ENCODE measurements at regions of chr15 and their contacts with region 1.

Region 1: DNA sequence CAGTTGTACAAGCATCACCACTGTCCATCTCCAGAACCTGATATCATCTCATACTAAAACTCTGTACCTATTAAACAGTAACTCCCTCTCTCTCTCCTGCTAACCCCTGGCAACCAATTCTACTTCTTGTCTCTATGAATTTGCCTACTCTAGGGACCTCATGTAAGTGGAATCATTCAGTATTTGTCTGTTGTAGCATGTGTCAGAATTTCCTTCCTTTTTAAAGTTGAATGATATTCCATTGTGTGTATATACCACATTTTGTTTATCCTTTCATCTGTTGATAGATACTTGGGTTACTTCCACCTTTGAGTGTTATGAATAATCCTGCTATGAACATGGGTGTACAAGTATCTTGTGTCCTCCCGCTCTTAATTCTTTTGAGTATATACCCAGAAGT is 16.6 kb downstream of the ZNF592 start:
- DNase-seq: no peak
- ATAC-seq: no peak
- H3K4me3 ChIP-seq: no peak overlapping the region
- H3K27ac ChIP-seq: peak overlapping the region in 2 of 4 donors; percentile 15 to 71
- H3K4me1 ChIP-seq: peaks cover 43 to 47% of the 10 kb centered on the region in 2 donors
- H3K27me3 ChIP-seq: no peaks in the 10 kb centered on the region
- CTCF ChIP-seq: no peak
- POLR2A ChIP-seq: no peak

Region 2: DNA sequence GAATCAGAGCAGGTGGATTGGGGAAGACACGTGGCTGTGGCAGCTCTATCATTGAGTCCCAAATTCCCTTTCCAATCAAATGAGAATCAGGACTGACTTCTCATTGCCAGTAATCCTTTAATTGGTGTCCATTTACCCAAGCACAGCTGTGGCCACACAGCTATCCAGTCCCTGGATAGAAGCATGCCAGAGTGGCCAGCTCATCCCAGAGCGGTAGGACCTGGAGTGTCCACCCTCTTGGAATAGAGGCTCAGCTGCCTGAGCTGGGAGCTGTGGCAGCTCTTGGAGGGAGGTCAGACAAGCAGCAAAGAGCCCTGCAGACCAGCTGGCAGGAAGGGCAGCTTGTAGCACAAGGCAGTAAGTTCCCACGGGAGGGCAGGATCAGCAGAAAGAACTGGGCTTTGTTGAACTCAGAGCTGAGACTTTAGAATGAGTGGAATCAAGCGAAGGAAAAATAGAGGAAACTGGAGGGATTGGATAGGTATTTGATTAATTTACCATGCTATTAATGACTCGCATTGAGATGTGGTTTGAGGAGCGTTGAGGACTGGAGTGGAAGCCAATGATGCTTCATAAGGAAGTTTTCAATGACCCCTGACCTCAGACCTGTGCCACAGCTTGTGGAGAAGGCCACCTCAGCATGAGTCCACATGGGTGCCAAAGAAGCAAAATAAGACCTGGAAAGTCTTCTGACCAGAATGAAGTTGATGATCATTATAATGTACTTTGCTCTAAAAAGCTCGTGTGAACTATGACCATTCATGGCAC is 45.3 kb after region 1 on chr15:
- in situ Hi-C with region 1: no loop called
- intact Hi-C with region 1: loop called (anchors 1 kb)
- DNase-seq: no peak
- ATAC-seq: peak; percentile 45 to 57
- H3K4me3 ChIP-seq: no peak overlapping the region
- H3K27ac ChIP-seq: peak overlapping the region in 1 of 4 donors; percentile 46
- H3K4me1 ChIP-seq: peaks cover 4 to 11% of the 10 kb centered on the region in 2 donors
- H3K27me3 ChIP-seq: no peaks in the 10 kb centered on the region
- CTCF ChIP-seq: no peak
- POLR2A ChIP-seq: no peak

Region 3: GRCh38 chr15:84863565-84864443 is 98.8 kb after region 1 on chr15:
- in situ Hi-C with region 1: no loop called
- intact Hi-C with region 1: no loop called
- DNase-seq: no peak
- ATAC-seq: no peak
- H3K4me3 ChIP-seq: no peak overlapping the region
- H3K27ac ChIP-seq: peak overlapping the region; percentile 21 to 58 (median 45)
- H3K4me1 ChIP-seq: peaks cover 4 to 10% of the 10 kb centered on the region in 2 donors
- H3K27me3 ChIP-seq: no peaks in the 10 kb centered on the region
- CTCF ChIP-seq: no peak
- POLR2A ChIP-seq: no peak